ENCODE measurements at regions of chr12 and their contacts with region 1.

Region 1: DNA sequence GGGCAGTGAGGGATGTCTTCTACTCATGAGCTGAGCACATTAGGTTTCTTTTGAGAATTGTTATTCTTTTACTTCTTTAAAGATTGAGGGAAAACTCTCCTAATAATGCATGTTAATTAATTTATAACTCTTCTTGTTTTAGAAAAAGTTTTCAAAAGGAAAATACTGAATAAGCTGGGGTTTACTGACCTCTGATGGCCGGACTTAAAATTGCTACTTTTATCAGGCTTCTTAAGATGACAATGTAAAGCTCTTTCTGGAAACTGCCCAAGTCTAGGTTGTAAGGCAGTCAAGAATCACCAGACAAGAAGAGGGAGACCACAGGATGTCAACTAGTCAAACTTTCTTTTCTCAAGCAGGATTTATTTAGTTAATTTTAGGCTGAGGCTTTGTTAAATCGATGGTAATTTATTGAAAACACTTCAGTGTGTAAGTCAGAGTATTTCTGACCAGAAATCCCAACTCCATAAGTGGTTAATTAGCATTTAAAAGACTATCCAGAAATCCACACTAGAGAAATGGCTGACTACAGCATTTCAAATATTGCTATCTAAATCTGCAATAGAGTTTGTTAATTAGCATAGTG is 82.1 kb downstream of the AVPR1A start:
- DNase-seq: no peak
- ATAC-seq: no peak
- H3K4me3 ChIP-seq: no peak overlapping the region
- H3K27ac ChIP-seq: peak overlapping the region in 5 of 12 donors; percentile 6 to 25 (median 16)
- H3K4me1 ChIP-seq: peaks cover 0 to 9% (median 0%) of the 10 kb centered on the region in 12 donors
- H3K27me3 ChIP-seq: no peaks in the 10 kb centered on the region
- CTCF ChIP-seq: peak; percentile 22 to 70 (median 58)
- POLR2A ChIP-seq: no peak

Region 2: DNA sequence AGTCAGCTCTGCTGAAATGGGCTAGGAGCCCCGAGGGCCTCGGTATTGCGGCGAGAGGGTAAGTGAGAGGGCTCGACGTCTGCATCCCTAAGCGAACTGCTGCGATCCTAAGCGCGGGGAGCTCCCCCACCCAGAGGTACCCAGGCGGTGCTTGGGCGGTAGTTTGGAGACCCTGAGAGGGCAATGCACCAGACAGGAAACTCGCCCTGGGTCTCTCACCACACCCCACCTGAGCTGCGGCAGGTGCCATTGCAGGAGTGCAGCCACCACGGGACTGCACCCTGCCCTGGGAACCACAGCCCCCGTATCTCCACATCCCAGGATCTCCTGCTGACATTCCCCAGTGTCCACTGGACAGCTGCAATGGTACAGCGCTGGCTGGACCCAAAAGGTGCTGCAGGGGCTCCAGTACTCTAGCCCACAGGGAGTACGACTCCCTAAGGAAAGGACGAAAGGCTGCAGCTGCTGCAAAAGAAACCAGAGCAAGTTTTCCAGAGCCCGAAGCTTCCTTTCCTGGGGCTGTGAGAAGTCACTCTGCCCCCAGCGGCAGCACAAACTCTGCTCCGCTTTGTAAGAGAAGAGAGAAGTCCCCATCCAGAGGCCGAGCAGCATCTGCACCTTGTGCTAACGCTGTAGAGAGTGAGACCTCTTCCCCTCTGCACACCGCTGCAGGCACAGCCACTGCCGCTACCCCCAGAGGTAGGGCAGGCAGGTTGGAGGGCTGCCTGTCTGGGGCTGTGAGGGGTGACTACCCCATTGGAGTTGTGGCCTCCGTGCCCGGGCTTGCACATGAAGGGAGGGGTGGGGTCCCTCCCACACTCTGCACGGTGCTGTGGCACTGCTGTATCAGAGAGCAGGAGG is 633.4 kb before region 1 on chr12:
- intact Hi-C with region 1: loop called in 5 of 10 experiments (anchors 5 to 10 kb)
- DNase-seq: peak; percentile 38 to 71 (median 47)
- ATAC-seq: peak; percentile 33 to 89 (median 84)
- H3K4me3 ChIP-seq: peak overlapping the region in 11 of 12 donors; percentile 30 to 63 (median 51)
- H3K27ac ChIP-seq: no peak overlapping the region
- H3K4me1 ChIP-seq: peaks cover 0 to 18% (median 9%) of the 10 kb centered on the region in 12 donors
- H3K27me3 ChIP-seq: peaks cover 0 to 38% (median 16%) of the 10 kb centered on the region in 9 donors
- CTCF ChIP-seq: peak in 11 of 12 donors; percentile 25 to 64 (median 40)
- POLR2A ChIP-seq: no peak

Region 3: DNA sequence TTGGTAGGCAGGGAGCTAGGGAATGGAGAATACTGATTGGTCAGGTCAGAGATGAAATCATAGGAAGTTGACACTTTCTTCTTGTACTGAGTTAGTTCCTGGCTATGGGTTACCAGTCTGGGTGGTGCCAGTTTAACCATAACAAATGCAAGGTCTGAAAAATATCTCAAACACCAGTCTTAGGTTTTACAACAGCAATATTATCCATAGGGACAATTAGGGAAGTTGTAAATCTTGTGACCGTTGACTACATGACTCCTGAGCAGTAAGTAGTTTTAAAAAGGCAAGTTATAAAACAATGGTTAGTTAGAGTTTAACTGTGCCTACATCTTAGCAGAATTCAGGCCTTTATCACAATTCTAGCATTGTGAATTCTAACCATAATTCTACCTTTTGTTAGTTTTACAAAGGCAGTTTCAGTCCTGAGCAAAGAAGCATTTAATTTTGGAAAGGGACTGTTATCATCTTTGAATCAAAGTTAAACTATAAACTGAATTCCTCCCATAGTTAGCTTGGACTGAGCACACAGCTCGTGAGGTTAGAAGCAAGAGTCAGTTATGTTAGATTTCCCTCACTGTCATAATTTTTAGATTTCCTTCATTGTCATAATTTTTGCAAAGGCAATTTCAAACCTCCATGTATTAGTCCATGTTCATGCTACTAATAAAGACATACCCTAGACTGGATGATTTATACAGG is 622.0 kb before region 1 on chr12:
- intact Hi-C with region 1: loop called in 2 of 10 experiments (anchors 5 to 10 kb)
- DNase-seq: no peak
- ATAC-seq: no peak
- H3K4me3 ChIP-seq: no peak overlapping the region
- H3K27ac ChIP-seq: no peak overlapping the region
- H3K4me1 ChIP-seq: no peaks in the 10 kb centered on the region
- H3K27me3 ChIP-seq: peaks cover 0 to under 1% (median 0%) of the 10 kb centered on the region in 9 donors
- CTCF ChIP-seq: no peak
- POLR2A ChIP-seq: no peak

Region 4: DNA sequence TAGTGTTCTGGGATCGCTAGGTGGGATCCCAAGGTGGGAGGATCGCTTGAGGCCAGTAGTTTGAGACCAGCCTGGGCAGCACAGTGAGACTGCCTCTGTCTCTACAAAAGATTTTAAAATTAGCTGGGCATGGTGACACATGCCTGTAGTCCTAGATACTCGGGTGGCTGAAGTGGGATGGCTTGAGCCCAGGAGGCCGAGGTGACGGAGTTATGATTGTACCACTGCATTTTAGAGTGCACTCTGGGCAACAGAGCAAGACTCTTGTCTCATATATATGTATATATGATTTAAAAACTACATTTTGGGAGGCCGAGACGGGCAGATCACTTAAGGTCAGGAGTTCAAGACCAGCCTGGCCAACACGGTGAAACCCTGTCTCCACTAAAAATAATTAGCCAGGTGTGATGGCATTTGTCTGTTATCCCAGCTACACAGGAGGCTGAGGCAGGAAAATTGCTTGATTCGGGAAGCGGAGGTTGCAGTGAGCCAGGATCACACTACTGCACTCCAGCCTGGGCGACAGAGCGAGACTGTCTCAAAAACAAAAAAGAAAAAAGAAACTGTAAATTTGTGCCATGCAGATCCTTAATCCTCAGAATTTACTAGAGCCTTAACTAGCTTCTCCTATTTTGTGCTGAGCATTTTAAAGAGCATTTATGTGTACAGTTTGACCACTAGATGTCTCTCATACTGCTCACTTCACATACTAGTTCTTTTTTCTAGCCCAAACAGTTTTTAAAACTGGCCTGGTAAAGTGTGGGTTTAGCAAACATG is 487.5 kb before region 1 on chr12:
- intact Hi-C with region 1: loop called in 4 of 10 experiments (anchors 5 to 10 kb)
- DNase-seq: peak in 4 of 5 donors; percentile 10 to 56 (median 46)
- ATAC-seq: peak; percentile 81 to 94 (median 87)
- H3K4me3 ChIP-seq: no peak overlapping the region
- H3K27ac ChIP-seq: peak overlapping the region in 5 of 12 donors; percentile 4 to 55 (median 25)
- H3K4me1 ChIP-seq: peaks cover 0 to 7% (median 0%) of the 10 kb centered on the region in 12 donors
- H3K27me3 ChIP-seq: no peaks in the 10 kb centered on the region
- CTCF ChIP-seq: peak; percentile 58 to 78 (median 69)
- POLR2A ChIP-seq: no peak

Region 5: GRCh38 chr12:62603061-62603810 is 465.7 kb before region 1 on chr12:
- intact Hi-C with region 1: loop called in 2 of 10 experiments (anchors 10 kb)
- DNase-seq: peak; percentile 89 to 94 (median 90)
- ATAC-seq: peak; percentile 84 to 95 (median 92)
- H3K4me3 ChIP-seq: peak overlapping the region; percentile 69 to 100 (median 88)
- H3K27ac ChIP-seq: peak overlapping the region; percentile 98 to 100 (median 100)
- H3K4me1 ChIP-seq: peaks cover 2 to 42% (median 20%) of the 10 kb centered on the region in 12 donors
- H3K27me3 ChIP-seq: no peaks in the 10 kb centered on the region
- CTCF ChIP-seq: peak; percentile 27 to 78 (median 54)
- POLR2A ChIP-seq: peak in 1 of 2 donors; percentile 50

Region 6: DNA sequence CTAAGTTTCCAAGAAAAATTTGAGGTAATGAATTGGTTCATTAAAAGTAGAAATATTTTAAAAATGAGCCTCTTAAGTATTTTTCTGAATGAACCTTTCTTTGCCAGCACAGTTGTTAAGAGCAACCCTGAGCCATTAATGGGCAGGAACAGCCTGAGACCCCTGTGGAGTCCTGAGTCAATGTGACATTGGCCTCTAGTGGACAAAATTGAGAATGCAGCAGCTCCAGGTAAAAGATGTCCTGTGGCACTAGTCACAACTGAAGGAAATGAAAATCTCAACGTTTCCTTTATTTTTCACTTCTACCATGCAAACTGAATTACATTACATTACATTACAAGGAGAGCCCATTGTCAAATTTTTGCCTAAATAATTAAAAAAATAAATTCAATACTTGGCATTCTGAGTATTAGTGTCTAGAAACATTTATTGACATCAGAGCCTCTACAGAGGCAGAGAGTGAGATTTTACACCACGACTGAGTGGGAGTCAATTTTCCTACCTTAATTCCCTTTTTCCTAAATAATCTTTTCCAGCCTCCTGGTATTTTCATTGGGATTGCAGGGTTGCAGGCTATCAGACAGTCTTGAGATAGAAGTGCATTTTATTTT is 269.7 kb before region 1 on chr12:
- intact Hi-C with region 1: loop called in 3 of 10 experiments (anchors 5 kb)
- DNase-seq: peak in 4 of 5 donors; percentile 43 to 53 (median 49)
- ATAC-seq: peak; percentile 62 to 84 (median 82)
- H3K4me3 ChIP-seq: no peak overlapping the region
- H3K27ac ChIP-seq: no peak overlapping the region
- H3K4me1 ChIP-seq: peaks cover 0 to 5% (median 0%) of the 10 kb centered on the region in 12 donors
- H3K27me3 ChIP-seq: no peaks in the 10 kb centered on the region
- CTCF ChIP-seq: peak; percentile 90 to 97 (median 94)
- POLR2A ChIP-seq: no peak

Region 7: GRCh38 chr12:62813031-62813829 is 255.7 kb before region 1 on chr12:
- intact Hi-C with region 1: loop called in 8 of 10 experiments (anchors 5 to 10 kb)
- DNase-seq: peak; percentile 52 to 76 (median 61)
- ATAC-seq: peak in 3 of 4 donors; percentile 70 to 83 (median 76)
- H3K4me3 ChIP-seq: peak overlapping the region in 6 of 12 donors; percentile 3 to 40 (median 22)
- H3K27ac ChIP-seq: no peak overlapping the region
- H3K4me1 ChIP-seq: peaks cover 0 to 15% (median 6%) of the 10 kb centered on the region in 12 donors
- H3K27me3 ChIP-seq: no peaks in the 10 kb centered on the region
- CTCF ChIP-seq: peak; percentile 51 to 85 (median 72)
- POLR2A ChIP-seq: no peak